Psoas muscle (tissue), 8 donors: ENCODE measurements at regions of chr17 and their contacts with region 1.

Region 1: GRCh38 chr17:42997984-42998938 is at the start of gene RPL27:
- DNase-seq: peak; percentile 98 to 99
- ATAC-seq: peak; percentile 97 to 98 (median 98)
- H3K4me3 ChIP-seq: peak within 1 kb of the TSS; percentile 93
- H3K27ac ChIP-seq: peak within 1 kb of the TSS; percentile 96
- H3K4me1 ChIP-seq: peaks cover 21% of the 10 kb centered on the region
- H3K27me3 ChIP-seq: no peaks in the 10 kb centered on the region
- CTCF ChIP-seq: peak; percentile 93
- total RNA-seq, gene RPL27: 506 to 1,045 (median 824) TPM

Region 2: GRCh38 chr17:42980398-42981397 is 17.6 kb before region 1 on chr17 and contains the start of gene RUNDC1:
- intact Hi-C with region 1: loop called in 1 of 2 experiments (anchors 1 kb)
- DNase-seq: peak; percentile 93 to 95
- ATAC-seq: peak; percentile 81 to 88 (median 86)
- H3K4me3 ChIP-seq: peak within 1 kb of the TSS; percentile 93
- H3K27ac ChIP-seq: peak within 1 kb of the TSS; percentile 96
- H3K4me1 ChIP-seq: peaks cover 25% of the 10 kb centered on the region
- H3K27me3 ChIP-seq: no peaks in the 10 kb centered on the region
- CTCF ChIP-seq: peak; percentile 18
- total RNA-seq, gene RUNDC1: 8.7 to 16.8 (median 12.8) TPM